GM12878 (cell line): ENCODE measurements at regions of chr1 and their contacts with region 1.

Region 1: GRCh38 chr1:167059045-167059808 is 30.9 kb downstream of the GPA33 start:
- DNase-seq: no peak
- ATAC-seq: peak; percentile 75
- H3K4me3 ChIP-seq: no peak overlapping the region
- H3K27ac ChIP-seq: no peak overlapping the region
- H3K4me1 ChIP-seq: 0 out of 2 replicates have a peak, but pooled peaks cover 3% of the 10 kb centered on the region
- H3K27me3 ChIP-seq: no peaks in the 10 kb centered on the region
- CTCF ChIP-seq: peak; percentile 87 to 90 (median 88)
- EP300 ChIP-seq: no peak
- POLR2A ChIP-seq: no peak
- RAD21 ChIP-seq: peak; percentile 85

Region 2: DNA sequence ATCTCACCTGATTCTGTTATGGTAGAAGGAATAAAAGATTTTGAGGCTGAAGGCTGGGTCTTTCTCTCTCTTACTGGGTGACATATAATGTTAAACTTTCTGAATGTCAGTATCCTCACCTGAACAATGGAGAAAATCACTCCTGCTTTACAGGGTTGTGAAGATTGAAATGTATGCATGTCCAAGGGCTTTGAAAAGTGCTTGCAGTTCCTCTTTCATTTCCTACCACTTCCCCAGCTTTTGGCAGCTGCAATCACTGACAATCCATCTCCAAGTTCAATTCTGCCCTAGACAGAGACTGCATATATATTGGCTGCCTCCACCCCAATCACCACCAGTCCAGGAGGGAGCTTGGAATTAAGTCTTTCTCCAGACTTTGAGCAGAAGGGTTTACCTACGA is 932.2 kb before region 1 on chr1:
- CTCF ChIA-PET with region 1: no interaction called
- POLR2A ChIA-PET with region 1: no interaction called
- RAD21 ChIA-PET with region 1: no interaction called
- SMC1A ChIA-PET with region 1: no interaction called
- in situ Hi-C with region 1: no loop called
- intact Hi-C with region 1: no loop called
- DNase-seq: no peak
- ATAC-seq: peak; percentile 28; the same call in 1 of the 3 replicates
- H3K4me3 ChIP-seq: no peak overlapping the region
- H3K27ac ChIP-seq: no peak overlapping the region
- H3K4me1 ChIP-seq: no peaks in the 10 kb centered on the region
- H3K27me3 ChIP-seq: no peaks in the 10 kb centered on the region
- CTCF ChIP-seq: no peak
- EP300 ChIP-seq: no peak
- POLR2A ChIP-seq: no peak
- RAD21 ChIP-seq: no peak

Region 3: DNA sequence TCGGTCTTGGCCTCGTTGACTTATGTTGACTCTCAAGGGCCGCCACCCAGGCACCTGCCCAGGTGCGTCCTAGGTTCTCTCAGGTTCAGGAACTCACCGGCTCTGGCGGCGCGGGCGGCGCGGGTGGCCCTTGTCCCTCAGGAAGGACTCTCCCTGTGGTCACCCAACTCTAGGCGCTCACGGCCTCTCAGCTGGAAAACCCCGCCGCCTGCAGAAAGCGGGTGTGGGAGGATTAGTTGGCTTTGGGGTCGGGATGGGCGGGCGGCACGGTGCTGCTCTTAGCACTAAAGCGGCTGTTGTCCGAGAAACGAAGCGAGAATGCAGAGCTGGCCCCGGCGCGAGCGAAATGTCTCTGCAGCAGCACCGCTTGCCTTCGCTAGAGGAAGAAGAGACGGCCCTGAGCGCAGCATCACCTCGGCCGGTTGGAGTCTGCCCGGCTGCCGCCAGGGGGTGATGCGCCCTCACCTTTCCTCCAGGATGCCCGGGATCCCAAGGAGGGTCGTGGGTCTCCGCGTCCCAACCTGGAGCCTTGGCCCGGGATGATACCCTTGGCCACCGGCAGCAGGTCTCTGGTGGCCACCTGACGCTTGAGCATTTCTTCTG is 175.1 kb before region 1 on chr1:
- CTCF ChIA-PET with region 1: interaction called, 31 read pairs
- POLR2A ChIA-PET with region 1: no interaction called
- RAD21 ChIA-PET with region 1: interaction called, 6 read pairs
- SMC1A ChIA-PET with region 1: interaction called, 12 read pairs
- in situ Hi-C with region 1: no loop called
- intact Hi-C with region 1: no loop called
- DNase-seq: no peak
- ATAC-seq: peak; percentile 79
- H3K4me3 ChIP-seq: no peak overlapping the region
- H3K27ac ChIP-seq: no peak overlapping the region
- H3K4me1 ChIP-seq: peaks cover 7% of the 10 kb centered on the region; the same call in 1 of the 2 replicates
- H3K27me3 ChIP-seq: peaks cover 0 to 4% of the 10 kb centered on the region in 2 experiments; a peak in 1 of 4 replicates
- CTCF ChIP-seq: peak; percentile 35 to 66 (median 49)
- EP300 ChIP-seq: no peak
- POLR2A ChIP-seq: no peak
- RAD21 ChIP-seq: peak; percentile 44

Region 4: GRCh38 chr1:166975361-166976129 is 83.7 kb before region 1 on chr1 and contains the start of gene ILDR2:
- CTCF ChIA-PET with region 1: interaction called, 5 read pairs
- POLR2A ChIA-PET with region 1: no interaction called
- RAD21 ChIA-PET with region 1: interaction called, 5 read pairs
- SMC1A ChIA-PET with region 1: interaction called, 8 read pairs
- in situ Hi-C with region 1: no loop called
- intact Hi-C with region 1: loop called (anchors 5 kb)
- DNase-seq: no peak
- ATAC-seq: peak; percentile 85
- H3K4me3 ChIP-seq: peak within 1 kb of the TSS; percentile 67
- H3K27ac ChIP-seq: peak within 1 kb of the TSS; percentile 29; the same call in 1 of the 2 replicates
- H3K4me1 ChIP-seq: peaks cover 26% of the 10 kb centered on the region
- H3K27me3 ChIP-seq: peaks cover 0 to 7% of the 10 kb centered on the region in 2 experiments
- CTCF ChIP-seq: no peak
- EP300 ChIP-seq: no peak
- POLR2A ChIP-seq: no peak; the same call in none of the 2 replicates
- RAD21 ChIP-seq: no peak
- polyA plus RNA-seq, gene ILDR2: 0.27 to 0.56 TPM

Region 5: GRCh38 chr1:167136191-167136614 is 77.0 kb after region 1 on chr1:
- CTCF ChIA-PET with region 1: interaction called, 20 read pairs
- POLR2A ChIA-PET with region 1: no interaction called
- RAD21 ChIA-PET with region 1: no interaction called
- SMC1A ChIA-PET with region 1: interaction called, 4 read pairs
- in situ Hi-C with region 1: no loop called
- intact Hi-C with region 1: no loop called
- DNase-seq: no peak
- ATAC-seq: no peak
- H3K4me3 ChIP-seq: no peak overlapping the region
- H3K27ac ChIP-seq: no peak overlapping the region
- H3K4me1 ChIP-seq: no peaks in the 10 kb centered on the region
- H3K27me3 ChIP-seq: peaks cover 3 to 8% of the 10 kb centered on the region in 2 experiments; a peak in 2 of 4 replicates
- CTCF ChIP-seq: no peak
- EP300 ChIP-seq: no peak
- POLR2A ChIP-seq: no peak
- RAD21 ChIP-seq: no peak

Region 6: GRCh38 chr1:167542109-167543032 is 483.1 kb after region 1 on chr1:
- CTCF ChIA-PET with region 1: interaction called, 13 read pairs
- POLR2A ChIA-PET with region 1: no interaction called
- RAD21 ChIA-PET with region 1: no interaction called
- SMC1A ChIA-PET with region 1: interaction called, 3 read pairs
- in situ Hi-C with region 1: no loop called
- intact Hi-C with region 1: no loop called
- DNase-seq: no peak
- ATAC-seq: peak; percentile 32
- H3K4me3 ChIP-seq: peak overlapping the region; percentile 23; the same call in 1 of the 2 replicates
- H3K27ac ChIP-seq: peak overlapping the region; percentile 45; the same call in 1 of the 2 replicates
- H3K4me1 ChIP-seq: peaks cover 59% of the 10 kb centered on the region
- H3K27me3 ChIP-seq: no peaks in the 10 kb centered on the region
- CTCF ChIP-seq: no peak
- EP300 ChIP-seq: no peak
- POLR2A ChIP-seq: no peak
- RAD21 ChIP-seq: no peak